HCT116 (cell line): ENCODE measurements at regions of chr10 and their contacts with region 1.

Region 1: DNA sequence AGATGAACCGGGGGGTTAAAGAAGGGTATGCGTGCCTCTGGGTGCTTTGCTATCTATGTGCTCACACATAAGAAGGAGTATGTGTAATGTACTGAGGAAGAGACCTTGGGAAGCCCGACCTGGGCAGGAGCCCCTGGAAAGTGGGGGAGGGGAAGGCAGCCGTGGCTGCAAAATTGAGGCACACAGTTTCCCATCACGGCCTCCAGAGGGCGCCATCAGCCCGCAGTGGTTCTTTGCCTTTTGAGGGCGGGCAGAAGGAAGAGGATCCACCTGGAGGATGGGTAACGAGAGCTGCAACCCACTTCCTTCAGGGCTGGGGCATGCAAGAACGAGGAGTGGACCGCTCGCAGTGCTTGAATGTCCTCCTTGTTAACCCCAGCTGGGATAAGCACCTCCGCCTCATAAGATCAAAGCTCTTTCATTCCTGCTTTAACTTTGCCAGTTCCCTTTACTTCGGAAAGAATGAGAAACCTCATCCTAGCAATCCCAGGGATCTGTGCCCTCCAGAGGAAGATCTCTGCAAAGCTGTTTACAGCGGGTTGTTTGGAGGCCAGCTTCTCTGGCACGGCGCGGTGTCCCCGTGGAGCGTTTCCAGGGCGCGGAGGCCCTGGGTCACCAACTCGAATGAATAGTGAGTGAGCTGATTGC is 77.9 kb downstream of the PCGF5 start:
- DNase-seq: peak; percentile 56
- ATAC-seq: peak; percentile 94
- H3K4me3 ChIP-seq: peak overlapping the region in 1 of 2 experiments; percentile 8; a peak in 1 of 4 replicates
- H3K27ac ChIP-seq: no peak overlapping the region
- H3K4me1 ChIP-seq: peaks cover 4 to 11% of the 10 kb centered on the region in 2 experiments; a peak in 2 of 4 replicates
- H3K27me3 ChIP-seq: no peaks in the 10 kb centered on the region
- CTCF ChIP-seq: peak; percentile 86 to 90 (median 87)
- POLR2A ChIP-seq: no peak
- RAD21 ChIP-seq: peak; percentile 96

Region 2: GRCh38 chr10:90912174-90912573 is 386.2 kb before region 1 on chr10:
- CTCF ChIA-PET with region 1: interaction called, 13 read pairs
- POLR2A ChIA-PET with region 1: no interaction called
- RAD21 ChIA-PET with region 1: interaction called in 1 of 2 experiments, 5 read pairs
- intact Hi-C with region 1: loop called (anchors 1 kb)
- DNase-seq: no peak
- ATAC-seq: no peak
- H3K4me3 ChIP-seq: no peak overlapping the region
- H3K27ac ChIP-seq: no peak overlapping the region
- H3K4me1 ChIP-seq: peaks cover 0 to 2% of the 10 kb centered on the region in 2 experiments; a peak in 1 of 4 replicates
- H3K27me3 ChIP-seq: no peaks in the 10 kb centered on the region
- CTCF ChIP-seq: no peak
- POLR2A ChIP-seq: no peak
- RAD21 ChIP-seq: no peak

Region 3: GRCh38 chr10:91006001-91006751 is 292.2 kb before region 1 on chr10:
- CTCF ChIA-PET with region 1: interaction called, 12 read pairs
- POLR2A ChIA-PET with region 1: no interaction called
- RAD21 ChIA-PET with region 1: no interaction called
- intact Hi-C with region 1: loop called (anchors 2 kb)
- DNase-seq: peak; percentile 51
- ATAC-seq: peak; percentile 93
- H3K4me3 ChIP-seq: no peak overlapping the region
- H3K27ac ChIP-seq: no peak overlapping the region
- H3K4me1 ChIP-seq: no peaks in the 10 kb centered on the region
- H3K27me3 ChIP-seq: no peaks in the 10 kb centered on the region
- CTCF ChIP-seq: peak; percentile 84 to 96 (median 91)
- POLR2A ChIP-seq: no peak
- RAD21 ChIP-seq: peak; percentile 94

Region 4: DNA sequence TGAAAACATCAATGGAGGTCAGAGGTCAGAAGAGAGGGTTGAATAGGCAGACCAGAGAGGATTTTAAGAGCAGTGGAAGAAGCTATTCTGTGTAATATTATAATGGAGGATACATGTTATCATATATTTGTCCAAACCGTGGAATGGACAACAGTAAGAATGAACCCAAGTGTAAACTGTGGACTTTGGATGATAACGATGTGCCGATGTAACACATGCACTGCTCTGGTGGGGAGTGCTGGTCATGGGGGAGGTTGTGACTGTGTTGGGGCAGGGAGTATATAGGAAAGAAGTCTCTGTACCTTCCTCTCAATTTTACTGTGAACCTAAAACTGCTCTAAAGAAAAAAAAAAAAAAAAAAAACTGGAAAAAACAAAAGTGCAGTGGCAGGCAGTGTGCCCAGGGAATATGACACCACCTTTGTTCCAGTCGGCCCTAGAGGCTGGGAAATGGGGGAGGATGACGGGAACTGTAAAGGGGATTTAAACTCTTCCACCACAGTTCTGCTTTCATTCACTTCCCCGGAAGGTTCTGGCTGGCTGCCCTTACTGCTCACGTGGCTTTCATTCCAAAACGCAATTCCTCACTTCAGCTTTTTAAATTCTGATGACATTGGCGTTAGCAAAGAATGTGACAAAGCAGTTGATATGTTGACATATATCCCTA is 263.7 kb before region 1 on chr10:
- CTCF ChIA-PET with region 1: no interaction called
- POLR2A ChIA-PET with region 1: no interaction called
- RAD21 ChIA-PET with region 1: no interaction called
- intact Hi-C with region 1: no loop called
- DNase-seq: no peak
- ATAC-seq: no peak
- H3K4me3 ChIP-seq: no peak overlapping the region
- H3K27ac ChIP-seq: no peak overlapping the region
- H3K4me1 ChIP-seq: no peaks in the 10 kb centered on the region
- H3K27me3 ChIP-seq: no peaks in the 10 kb centered on the region
- CTCF ChIP-seq: no peak
- POLR2A ChIP-seq: no peak
- RAD21 ChIP-seq: no peak

Region 5: DNA sequence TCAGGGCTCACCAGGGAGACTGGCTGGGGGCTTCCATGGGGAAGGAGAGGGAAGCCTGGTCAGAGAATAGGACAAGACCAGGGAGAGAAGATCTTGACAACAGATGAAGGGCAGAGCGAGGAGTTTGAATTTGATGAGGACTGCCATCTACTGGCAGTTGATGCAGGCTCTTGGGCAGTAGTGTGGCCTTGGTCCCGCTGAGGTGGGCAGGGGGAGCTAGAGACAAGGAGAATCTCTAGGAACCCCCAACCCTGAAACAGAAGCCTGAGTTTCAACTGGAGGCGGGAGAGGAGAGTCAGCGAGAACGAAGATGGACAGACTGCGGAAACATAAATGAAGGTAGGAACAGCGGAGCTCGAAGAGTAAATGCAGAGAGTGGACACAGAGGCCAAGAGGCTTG is 253.5 kb after region 1 on chr10:
- CTCF ChIA-PET with region 1: interaction called, 22 read pairs
- POLR2A ChIA-PET with region 1: interaction called, 4 read pairs
- RAD21 ChIA-PET with region 1: interaction called in 1 of 2 experiments, 3 read pairs
- intact Hi-C with region 1: loop called (anchors 1 kb)
- DNase-seq: peak; percentile 16
- ATAC-seq: peak; percentile 84
- H3K4me3 ChIP-seq: no peak overlapping the region
- H3K27ac ChIP-seq: no peak overlapping the region
- H3K4me1 ChIP-seq: no peaks in the 10 kb centered on the region
- H3K27me3 ChIP-seq: no peaks in the 10 kb centered on the region
- CTCF ChIP-seq: peak; percentile 62 to 97 (median 71)
- POLR2A ChIP-seq: no peak
- RAD21 ChIP-seq: peak; percentile 84